ENCODE measurements at regions of chr16 and their contacts with region 1.

Region 1: DNA sequence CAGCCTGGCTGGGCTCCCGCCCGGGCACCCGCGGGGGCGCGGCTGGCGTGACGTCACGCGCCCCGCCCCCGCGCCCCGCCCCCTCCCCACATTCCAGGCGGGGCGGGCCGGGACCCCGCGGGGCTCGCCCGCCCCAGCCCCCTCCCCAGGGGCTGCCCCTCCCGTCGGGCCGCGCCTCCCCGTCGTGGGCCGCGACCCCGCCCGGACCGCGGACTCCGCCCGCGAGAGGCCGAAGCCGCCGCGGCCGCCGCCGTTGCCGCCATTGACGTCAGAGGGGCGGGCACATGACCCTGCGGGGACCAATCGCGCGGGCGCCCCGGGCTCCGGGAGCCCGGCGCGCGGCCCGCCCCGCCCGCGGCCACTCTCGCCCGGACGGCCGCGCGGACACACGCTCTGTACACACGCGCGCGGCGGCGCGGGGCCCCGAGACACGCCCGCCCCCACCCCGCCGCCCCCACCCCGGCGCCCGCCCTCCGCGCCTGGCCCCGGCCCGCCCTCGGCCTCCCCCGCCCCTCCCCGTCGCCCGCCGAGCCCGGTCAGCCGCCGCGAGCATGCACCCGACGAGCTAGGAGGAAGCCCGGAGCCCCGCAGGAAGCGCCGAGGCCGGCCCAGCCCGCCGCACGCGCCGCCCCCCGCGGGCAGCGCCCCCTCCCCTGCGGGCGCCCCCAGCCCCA is at the start of gene CMIP:
- H3K4me3 Mint-ChIP-seq: peak within 1 kb of the TSS; percentile 100
- H3K27ac Mint-ChIP-seq: peak within 1 kb of the TSS; percentile 90
- H3K4me1 Mint-ChIP-seq: peaks cover 57% of the 10 kb centered on the region
- H3K27me3 Mint-ChIP-seq: peaks cover 22% of the 10 kb centered on the region

Region 2: DNA sequence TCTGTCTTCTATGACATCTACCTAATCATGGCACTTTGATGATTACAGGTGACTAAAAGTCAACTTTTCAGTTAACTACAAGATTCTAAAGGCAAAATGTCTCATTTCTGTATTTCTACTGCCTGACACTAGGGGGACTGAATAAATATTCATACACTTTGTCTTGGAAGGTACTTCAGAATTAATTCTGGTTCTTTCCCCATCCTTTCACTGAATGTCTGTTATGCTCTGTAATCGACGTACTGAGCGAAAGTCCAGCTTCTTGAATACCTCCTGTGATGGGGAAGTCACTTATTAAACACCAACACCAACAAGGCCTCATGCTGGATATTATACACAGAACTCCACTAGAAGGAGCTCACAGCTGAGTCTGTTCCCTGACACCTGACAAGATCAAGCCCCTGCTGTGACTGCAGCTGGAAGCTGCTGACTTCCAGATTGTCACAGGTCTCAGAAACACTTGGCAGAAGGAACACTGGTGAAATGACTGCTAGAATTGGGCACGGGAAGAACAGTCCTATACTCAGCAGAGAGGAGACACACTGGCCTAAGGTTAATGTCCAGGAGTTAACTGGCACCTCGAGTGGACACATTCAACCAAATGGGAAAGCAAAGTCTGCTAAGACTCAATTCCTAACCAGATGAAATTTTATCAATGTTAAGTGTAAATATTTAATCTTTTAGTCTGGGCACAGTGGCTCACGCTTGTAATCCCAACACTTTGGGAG is 469.8 kb before region 1 on chr16:
- intact Hi-C with region 1: no loop called
- H3K4me3 Mint-ChIP-seq: no peak overlapping the region
- H3K27ac Mint-ChIP-seq: no peak overlapping the region
- H3K4me1 Mint-ChIP-seq: peaks cover 6% of the 10 kb centered on the region
- H3K27me3 Mint-ChIP-seq: no peaks in the 10 kb centered on the region

Region 3: DNA sequence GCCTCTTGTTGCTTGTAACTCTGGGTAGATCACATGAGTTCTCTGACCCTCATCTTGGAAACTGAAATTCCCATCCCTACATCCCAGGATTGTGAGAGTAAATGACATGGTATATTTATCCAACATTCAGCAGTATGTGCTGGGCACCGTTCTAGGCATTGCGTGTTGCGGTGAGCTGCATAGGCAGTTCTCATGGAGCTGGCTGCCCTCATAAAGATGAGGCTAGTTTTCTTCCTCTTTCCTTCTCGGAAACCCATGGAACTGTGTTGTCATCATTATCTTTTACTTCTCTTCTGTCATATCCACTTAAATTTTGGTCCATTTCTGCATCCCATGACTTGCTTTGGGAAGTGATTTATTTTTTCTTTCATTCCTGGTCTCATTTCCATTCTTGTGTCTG is 17.2 kb after region 1 on chr16:
- intact Hi-C with region 1: loop called (anchors 2 kb)
- H3K4me3 Mint-ChIP-seq: peak overlapping the region; percentile 34
- H3K27ac Mint-ChIP-seq: peak overlapping the region; percentile 82
- H3K4me1 Mint-ChIP-seq: peaks cover 100% of the 10 kb centered on the region
- H3K27me3 Mint-ChIP-seq: no peaks in the 10 kb centered on the region

Region 4: DNA sequence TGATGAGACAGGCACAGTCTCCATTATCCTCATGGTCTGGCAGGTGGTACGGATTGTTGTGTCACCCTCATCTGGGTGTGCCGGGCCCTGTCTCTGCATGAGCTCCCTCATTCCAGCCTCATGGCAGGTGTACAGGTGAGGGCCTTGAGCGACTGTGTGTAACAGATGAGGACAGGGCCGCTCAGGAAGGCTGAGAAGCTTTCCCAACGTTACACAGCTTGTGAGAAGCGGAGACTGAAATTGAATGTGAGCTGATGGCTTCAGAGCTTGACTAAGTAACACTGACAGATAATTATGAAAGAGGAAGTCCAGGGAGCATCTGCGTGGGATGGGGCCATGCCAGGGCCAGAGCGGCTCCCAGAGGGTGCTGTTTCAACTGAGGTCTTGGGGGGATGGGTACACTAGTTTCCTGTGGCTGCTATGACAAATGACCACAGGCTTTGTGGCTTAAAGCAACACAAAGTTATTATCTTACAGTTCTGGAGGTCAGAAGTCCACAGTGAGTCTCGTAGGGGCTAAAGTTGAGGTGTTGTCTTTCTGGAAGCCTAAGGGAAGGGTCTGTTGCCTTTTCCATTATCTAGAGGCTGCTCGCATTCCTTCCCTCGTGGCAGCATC is 36.7 kb after region 1 on chr16:
- intact Hi-C with region 1: loop called (anchors 5 kb)
- H3K4me3 Mint-ChIP-seq: peak overlapping the region; percentile 58
- H3K27ac Mint-ChIP-seq: peak overlapping the region; percentile 83
- H3K4me1 Mint-ChIP-seq: peaks cover 99% of the 10 kb centered on the region
- H3K27me3 Mint-ChIP-seq: no peaks in the 10 kb centered on the region

Region 5: GRCh38 chr16:81521151-81521626 is 76.6 kb after region 1 on chr16:
- intact Hi-C with region 1: loop called (anchors 5 kb)
- H3K4me3 Mint-ChIP-seq: no peak overlapping the region
- H3K27ac Mint-ChIP-seq: peak overlapping the region; percentile 46
- H3K4me1 Mint-ChIP-seq: peaks cover 56% of the 10 kb centered on the region
- H3K27me3 Mint-ChIP-seq: no peaks in the 10 kb centered on the region